ENCODE measurements at regions of chr10 and their contacts with region 1.

Region 1: DNA sequence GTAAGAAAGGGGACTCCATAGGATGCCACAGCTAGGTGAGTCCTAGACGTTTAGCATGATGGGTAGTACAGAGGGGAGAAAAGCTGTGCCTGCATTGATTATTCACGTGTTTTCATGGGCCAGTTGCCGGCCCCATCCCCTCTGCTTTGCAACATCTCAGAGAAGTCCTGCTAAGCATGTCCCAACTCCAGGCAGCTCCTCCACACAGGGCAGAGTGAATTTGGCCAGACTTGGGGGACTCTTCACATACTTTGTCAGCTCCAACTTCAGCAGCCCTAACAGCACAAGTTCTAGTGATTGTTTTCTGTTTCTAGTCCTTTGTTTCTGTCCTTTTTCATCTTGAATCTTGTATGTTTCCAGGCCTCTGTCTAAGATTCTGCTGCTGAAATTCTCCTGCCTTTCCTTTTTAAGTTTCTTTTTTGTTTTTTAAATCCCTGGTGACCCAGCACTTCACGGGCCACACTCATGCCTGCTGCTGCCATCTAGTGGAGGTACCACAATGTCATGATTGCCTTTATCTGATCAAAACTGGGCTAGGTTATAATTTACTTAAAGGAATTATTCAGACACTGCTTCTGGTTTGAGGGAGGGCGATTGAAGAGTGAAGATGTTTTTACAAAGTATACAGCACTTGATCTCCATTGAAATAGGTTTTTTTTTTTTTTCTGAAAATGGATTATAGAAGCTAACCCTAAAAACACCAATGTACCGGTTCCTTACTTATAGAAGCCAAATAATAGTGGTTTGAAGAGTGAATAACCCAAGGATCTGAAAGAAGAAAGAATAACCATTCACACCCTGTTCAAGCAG is 276.9 kb downstream of the CSTF2T start:
- DNase-seq: peak; percentile 72
- H3K4me3 ChIP-seq: no peak overlapping the region
- H3K27ac ChIP-seq: no peak overlapping the region
- H3K4me1 ChIP-seq: peaks cover 6% of the 10 kb centered on the region
- H3K27me3 ChIP-seq: no peaks in the 10 kb centered on the region
- CTCF ChIP-seq: peak; percentile 62 to 70
- POLR2A ChIP-seq: no peak

Region 2: DNA sequence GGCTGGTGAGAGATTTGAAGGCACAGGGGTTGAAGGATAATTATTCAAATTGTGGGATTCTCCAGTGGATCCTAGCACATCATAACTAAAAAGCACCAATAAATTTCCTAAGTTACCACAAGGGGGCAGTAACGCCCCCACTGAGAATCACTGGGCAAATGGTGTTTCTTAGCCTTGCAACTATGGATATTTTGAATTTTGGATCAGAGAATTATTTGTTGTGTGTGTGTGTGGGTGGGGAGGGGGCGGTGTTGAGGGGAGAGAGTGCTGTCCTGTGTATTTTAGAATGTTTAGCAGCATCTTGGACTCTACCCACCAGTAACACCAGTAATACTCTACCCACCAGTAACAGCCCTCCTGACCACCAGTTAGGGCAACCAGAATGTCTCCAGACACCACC is 411.5 kb before region 1 on chr10:
- CTCF ChIA-PET with region 1: interaction called, 3 read pairs
- POLR2A ChIA-PET with region 1: no interaction called
- dilution Hi-C with region 1: no loop called
- intact Hi-C with region 1: loop called (anchors 5 kb)
- DNase-seq: peak; percentile 46
- H3K4me3 ChIP-seq: no peak overlapping the region
- H3K27ac ChIP-seq: no peak overlapping the region
- H3K4me1 ChIP-seq: no peaks in the 10 kb centered on the region
- H3K27me3 ChIP-seq: peaks cover 4 to 6% of the 10 kb centered on the region in 2 experiments
- CTCF ChIP-seq: peak; percentile 56 to 73
- POLR2A ChIP-seq: no peak

Region 3: DNA sequence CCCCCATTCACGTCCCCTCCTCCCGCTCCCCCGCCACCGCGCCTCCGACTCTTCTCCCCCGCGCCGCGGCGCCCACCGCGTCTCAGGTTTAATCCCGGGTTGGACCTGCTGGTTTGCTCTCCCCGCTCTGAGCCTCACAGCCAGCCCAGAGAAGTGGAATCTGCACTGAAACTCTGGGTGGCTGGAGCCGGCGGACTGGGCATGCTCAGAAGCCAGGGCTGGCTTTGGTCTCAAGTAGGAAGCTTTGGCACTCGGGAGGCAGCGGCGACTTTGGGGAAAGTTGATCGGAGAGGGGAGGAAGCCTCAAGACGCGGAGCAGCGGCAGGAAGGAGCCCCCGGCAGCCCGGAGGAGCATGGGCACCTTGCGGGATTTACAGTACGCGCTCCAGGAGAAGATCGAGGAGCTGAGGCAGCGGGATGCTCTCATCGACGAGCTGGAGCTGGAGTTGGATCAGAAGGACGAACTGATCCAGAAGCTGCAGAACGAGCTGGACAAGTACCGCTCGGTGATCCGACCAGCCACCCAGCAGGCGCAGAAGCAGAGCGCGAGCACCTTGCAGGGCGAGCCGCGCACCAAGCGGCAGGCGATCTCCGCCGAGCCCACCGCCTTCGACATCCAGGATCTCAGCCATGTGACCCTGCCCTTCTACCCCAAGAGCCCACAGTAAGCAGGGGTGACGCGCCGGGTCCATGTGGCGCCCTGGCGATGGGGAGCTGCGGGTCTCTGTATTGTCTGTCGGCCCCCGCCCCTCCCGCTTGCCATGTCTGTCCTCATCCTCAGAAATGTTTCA is 348.1 kb before region 1 on chr10 and contains the start of gene PRKG1:
- CTCF ChIA-PET with region 1: interaction called, 15 read pairs
- POLR2A ChIA-PET with region 1: no interaction called
- dilution Hi-C with region 1: no loop called
- intact Hi-C with region 1: no loop called
- DNase-seq: peak; percentile 66
- H3K4me3 ChIP-seq: peak within 1 kb of the TSS; percentile 21 to 62 (median 61)
- H3K27ac ChIP-seq: no peak within 1 kb of the TSS
- H3K4me1 ChIP-seq: peaks cover 5% of the 10 kb centered on the region
- H3K27me3 ChIP-seq: peaks cover 24 to 38% of the 10 kb centered on the region in 2 experiments
- CTCF ChIP-seq: no peak
- POLR2A ChIP-seq: no peak
- total RNA-seq, gene PRKG1: 0.18 and 0.39 TPM in 2 replicates

Region 4: GRCh38 chr10:51960494-51960895 is 538.0 kb after region 1 on chr10:
- CTCF ChIA-PET with region 1: interaction called, 11 read pairs
- POLR2A ChIA-PET with region 1: no interaction called
- dilution Hi-C with region 1: no loop called
- intact Hi-C with region 1: loop called (anchors 1 kb)
- DNase-seq: peak; percentile 52
- H3K4me3 ChIP-seq: no peak overlapping the region
- H3K27ac ChIP-seq: no peak overlapping the region
- H3K4me1 ChIP-seq: no peaks in the 10 kb centered on the region
- H3K27me3 ChIP-seq: no peaks in the 10 kb centered on the region
- CTCF ChIP-seq: peak; percentile 33 to 34
- POLR2A ChIP-seq: no peak